Activated CD4-positive, alpha-beta T cell treated with anti-CD3 and anti-CD28 coated beads for 36 hours (primary cell): ENCODE measurements at regions of chr10 and their contacts with region 1.

Region 1: GRCh38 chr10:104291439-104291951 is 22.5 kb downstream of the GSTO2 start:
- DNase-seq: peak; percentile 94
- ATAC-seq: peak; percentile 99
- H3K4me3 Mint-ChIP-seq: no peak overlapping the region
- H3K27ac Mint-ChIP-seq: no peak overlapping the region
- H3K4me1 Mint-ChIP-seq: peaks cover 19% of the 10 kb centered on the region
- H3K27me3 Mint-ChIP-seq: peaks cover 15% of the 10 kb centered on the region

Region 2: DNA sequence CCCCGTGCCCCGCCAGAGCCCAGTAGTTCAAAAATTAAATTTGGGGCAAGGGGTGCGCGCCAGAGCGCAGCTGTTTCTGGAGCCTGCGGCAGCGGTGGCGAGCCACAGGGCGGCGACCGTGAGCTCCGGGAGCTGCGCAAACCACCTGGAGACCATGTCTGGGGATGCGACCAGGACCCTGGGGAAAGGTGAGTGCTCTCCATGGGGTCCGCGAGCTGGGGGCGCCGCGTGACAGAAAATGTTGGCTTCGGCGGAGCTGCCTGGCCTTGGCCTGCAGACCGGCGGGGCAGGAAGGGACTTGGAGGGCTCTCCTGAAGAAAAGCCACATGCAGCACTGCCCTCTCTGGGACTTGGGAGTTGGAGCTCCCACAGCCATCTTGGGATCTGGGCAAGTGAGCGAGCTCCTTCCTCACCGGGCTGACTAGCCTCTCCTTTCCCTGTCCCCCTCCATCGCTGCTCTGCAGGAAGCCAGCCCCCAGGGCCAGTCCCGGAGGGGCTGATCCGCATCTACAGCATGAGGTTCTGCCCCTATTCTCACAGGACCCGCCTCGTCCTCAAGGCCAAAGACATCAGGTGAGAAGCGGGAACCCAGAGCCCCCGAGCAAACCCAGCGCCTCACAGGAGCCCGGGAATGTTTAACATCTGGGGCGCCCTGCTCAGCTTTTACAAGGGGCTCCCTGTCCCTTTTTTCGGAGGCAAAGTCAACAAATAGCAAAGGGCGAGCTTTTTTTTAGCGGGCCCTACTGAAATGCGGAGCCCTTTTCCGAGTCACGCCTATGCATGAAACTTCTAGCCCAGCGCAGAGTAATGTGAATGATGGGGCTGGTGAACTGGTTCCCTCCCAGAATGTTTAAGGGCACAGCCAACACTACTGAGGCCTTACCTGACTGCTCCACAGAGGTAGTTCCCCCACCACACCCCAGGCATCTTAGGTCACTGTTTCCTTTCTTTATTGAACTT is 16.5 kb before region 1 on chr10:
- CTCF ChIA-PET with region 1: interaction called, 115 read pairs
- POLR2A ChIA-PET with region 1: no interaction called
- intact Hi-C with region 1: no loop called
- DNase-seq: peak; percentile 75
- ATAC-seq: peak; percentile 93
- H3K4me3 Mint-ChIP-seq: peak overlapping the region; percentile 30
- H3K27ac Mint-ChIP-seq: no peak overlapping the region
- H3K4me1 Mint-ChIP-seq: no peaks in the 10 kb centered on the region
- H3K27me3 Mint-ChIP-seq: peaks cover 8% of the 10 kb centered on the region

Region 3: GRCh38 chr10:104322416-104322782 is 30.9 kb after region 1 on chr10:
- CTCF ChIA-PET with region 1: interaction called, 19 read pairs
- POLR2A ChIA-PET with region 1: no interaction called
- intact Hi-C with region 1: no loop called
- DNase-seq: peak; percentile 64
- ATAC-seq: peak; percentile 64
- H3K4me3 Mint-ChIP-seq: peak overlapping the region; percentile 51
- H3K27ac Mint-ChIP-seq: peak overlapping the region; percentile 87
- H3K4me1 Mint-ChIP-seq: peaks cover 93% of the 10 kb centered on the region
- H3K27me3 Mint-ChIP-seq: no peaks in the 10 kb centered on the region

Region 4: DNA sequence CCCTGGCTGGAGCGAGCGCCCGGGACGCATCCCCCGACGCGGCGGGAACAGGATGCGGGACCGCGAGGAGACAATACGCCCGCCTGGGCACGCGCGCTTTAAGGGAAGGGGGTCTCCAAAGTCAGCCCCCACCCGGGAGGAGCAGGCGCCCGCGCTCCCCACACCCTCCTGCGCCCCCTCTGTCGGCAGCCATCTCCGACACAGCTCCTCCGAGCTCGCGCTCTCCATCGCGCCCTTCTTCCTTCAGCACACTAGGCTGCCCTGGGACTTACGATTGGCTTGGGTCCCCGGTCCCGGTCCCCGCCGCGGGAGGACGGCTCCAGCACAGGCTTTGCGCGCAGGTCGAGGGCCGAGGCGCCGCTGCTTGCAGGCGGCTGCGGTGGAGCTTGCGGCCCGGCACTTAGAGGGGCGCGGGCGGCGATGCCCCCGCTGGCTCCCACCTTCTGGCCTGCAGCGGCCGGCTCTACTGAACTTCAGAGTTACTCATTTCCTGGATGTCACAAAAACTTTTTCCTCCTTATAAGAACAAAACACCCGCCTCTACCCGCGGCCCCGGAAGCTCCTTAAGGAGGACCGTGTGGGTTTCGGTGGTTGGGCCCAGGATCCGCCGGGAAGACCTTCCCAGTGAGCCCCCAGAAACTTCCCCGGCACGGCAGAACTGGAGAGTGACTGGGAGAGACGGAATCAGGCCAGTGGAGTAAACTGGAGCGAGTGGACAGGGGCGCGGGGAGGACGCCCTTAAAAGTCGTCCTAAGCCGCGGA is 46.7 kb after region 1 on chr10 and contains the start of gene ITPRIP:
- CTCF ChIA-PET with region 1: interaction called, 64 read pairs
- POLR2A ChIA-PET with region 1: no interaction called
- intact Hi-C with region 1: no loop called
- DNase-seq: peak; percentile 82
- ATAC-seq: peak; percentile 78
- H3K4me3 Mint-ChIP-seq: peak within 1 kb of the TSS; percentile 93
- H3K27ac Mint-ChIP-seq: peak within 1 kb of the TSS; percentile 99
- H3K4me1 Mint-ChIP-seq: peaks cover 45% of the 10 kb centered on the region
- H3K27me3 Mint-ChIP-seq: no peaks in the 10 kb centered on the region
- total RNA-seq, gene ITPRIP: 20.3 to 21.6 TPM

Region 5: DNA sequence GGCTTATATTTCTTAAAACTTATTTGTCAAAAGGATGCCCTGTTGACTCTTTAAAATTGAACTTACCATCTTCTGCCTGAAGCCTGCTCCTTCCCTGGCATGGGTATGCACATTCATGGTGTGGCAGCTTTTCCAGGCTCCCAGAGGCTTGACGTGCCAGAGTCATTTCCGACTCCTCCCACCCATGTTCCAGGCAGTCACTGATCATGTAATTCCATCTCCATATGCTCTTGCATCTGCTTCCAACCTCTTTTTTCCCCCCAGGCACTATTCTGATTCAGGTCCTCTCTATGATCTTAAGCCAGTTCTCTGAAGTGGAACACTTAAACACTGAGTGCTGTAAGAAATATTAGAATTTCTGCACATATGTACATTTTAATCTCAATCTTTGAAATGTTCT is 144.3 kb after region 1 on chr10:
- CTCF ChIA-PET with region 1: no interaction called
- POLR2A ChIA-PET with region 1: no interaction called
- intact Hi-C with region 1: no loop called
- DNase-seq: no peak
- ATAC-seq: no peak
- H3K4me3 Mint-ChIP-seq: no peak overlapping the region
- H3K27ac Mint-ChIP-seq: no peak overlapping the region
- H3K4me1 Mint-ChIP-seq: no peaks in the 10 kb centered on the region
- H3K27me3 Mint-ChIP-seq: peaks cover 8% of the 10 kb centered on the region

Region 6: GRCh38 chr10:104622598-104623209 is 331.2 kb after region 1 on chr10:
- CTCF ChIA-PET with region 1: interaction called, 3 read pairs
- POLR2A ChIA-PET with region 1: no interaction called
- intact Hi-C with region 1: loop called in 1 of 2 experiments (anchors 1 kb)
- DNase-seq: peak; percentile 44
- ATAC-seq: no peak
- H3K4me3 Mint-ChIP-seq: no peak overlapping the region
- H3K27ac Mint-ChIP-seq: no peak overlapping the region
- H3K4me1 Mint-ChIP-seq: no peaks in the 10 kb centered on the region
- H3K27me3 Mint-ChIP-seq: peaks cover 24% of the 10 kb centered on the region